SK-N-SH (cell line): ENCODE measurements at regions of chr3 and their contacts with region 1.

Region 1: GRCh38 chr3:173553635-173554280 is 156.2 kb downstream of the NLGN1 start:
- DNase-seq: peak; percentile 26
- H3K4me3 ChIP-seq: no peak overlapping the region
- H3K27ac ChIP-seq: no peak overlapping the region
- H3K4me1 ChIP-seq: no peaks in the 10 kb centered on the region
- H3K27me3 ChIP-seq: no peaks in the 10 kb centered on the region
- CTCF ChIP-seq: peak; percentile 83
- EP300 ChIP-seq: no peak
- RAD21 ChIP-seq: peak; percentile 62

Region 2: DNA sequence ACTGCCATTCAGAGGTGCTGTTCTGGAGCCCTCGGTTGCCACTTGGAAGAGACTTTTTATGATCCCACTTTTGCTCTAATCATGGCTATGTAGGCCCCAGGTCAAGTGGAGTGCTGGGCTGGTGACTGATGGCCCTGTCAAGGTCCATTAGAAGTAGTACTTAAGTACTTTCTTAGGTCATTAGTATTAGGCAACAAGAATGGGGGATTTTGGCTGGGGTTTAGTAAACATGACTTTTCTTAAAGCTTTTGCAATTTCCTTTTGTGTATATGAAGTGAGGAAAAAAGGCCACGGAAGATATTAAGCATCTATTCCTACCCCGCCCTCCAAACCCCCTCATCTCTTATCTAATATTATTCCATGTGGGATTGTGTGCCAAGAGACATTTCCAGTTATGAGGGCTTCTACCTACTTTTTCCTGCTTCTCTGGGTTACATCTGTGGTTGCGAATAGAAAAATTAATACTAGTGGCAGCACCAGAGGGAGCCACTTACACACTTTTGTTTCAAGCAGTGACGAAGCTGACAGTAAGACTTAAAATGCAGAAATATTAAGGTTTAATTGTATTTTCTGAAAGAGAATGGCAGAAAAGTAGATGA is 142.3 kb before region 1 on chr3:
- CTCF ChIA-PET with region 1: interaction called, 29 read pairs
- POLR2A ChIA-PET with region 1: no interaction called
- DNase-seq: peak; percentile 37
- H3K4me3 ChIP-seq: no peak overlapping the region; a peak in 1 of 4 replicates
- H3K27ac ChIP-seq: no peak overlapping the region
- H3K4me1 ChIP-seq: no peaks in the 10 kb centered on the region; a peak in 2 of 4 replicates
- H3K27me3 ChIP-seq: no peaks in the 10 kb centered on the region
- CTCF ChIP-seq: peak; percentile 72
- EP300 ChIP-seq: no peak
- RAD21 ChIP-seq: peak; percentile 76

Region 3: DNA sequence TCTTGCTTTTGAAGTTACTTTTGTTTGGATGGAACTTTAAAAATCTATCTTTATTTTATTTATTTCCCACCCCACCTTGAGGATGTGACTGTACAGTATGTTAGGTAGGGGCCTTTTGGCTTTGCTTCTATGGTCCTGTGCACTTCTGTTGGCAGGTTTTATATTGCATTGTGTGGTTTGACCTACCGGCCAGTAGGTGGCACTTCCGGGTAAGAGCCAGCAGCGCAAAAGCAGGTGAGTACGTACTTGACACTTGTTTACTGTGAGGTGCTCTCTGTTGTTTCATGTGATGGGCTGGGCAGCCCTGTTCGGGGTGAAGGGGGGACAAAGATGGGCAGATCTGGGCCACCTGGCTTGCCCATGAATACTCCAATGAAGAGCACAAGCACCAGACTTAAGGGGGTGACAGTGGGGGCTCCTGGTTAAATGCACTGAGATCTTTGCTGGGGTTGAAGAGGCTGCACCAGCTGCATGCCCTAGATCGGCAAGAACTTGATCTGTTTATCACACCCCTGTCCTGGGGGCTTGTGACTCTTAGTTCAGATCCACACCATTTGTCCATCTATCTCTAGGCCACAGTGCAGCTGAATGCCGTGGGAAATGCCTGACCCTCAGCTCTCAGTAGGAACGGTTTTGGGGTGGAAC is 24.6 kb before region 1 on chr3:
- CTCF ChIA-PET with region 1: interaction called, 13 read pairs
- POLR2A ChIA-PET with region 1: no interaction called
- DNase-seq: peak; percentile 11
- H3K4me3 ChIP-seq: no peak overlapping the region
- H3K27ac ChIP-seq: no peak overlapping the region
- H3K4me1 ChIP-seq: no peaks in the 10 kb centered on the region
- H3K27me3 ChIP-seq: no peaks in the 10 kb centered on the region
- CTCF ChIP-seq: peak; percentile 53
- EP300 ChIP-seq: no peak
- RAD21 ChIP-seq: peak; percentile 59

Region 4: DNA sequence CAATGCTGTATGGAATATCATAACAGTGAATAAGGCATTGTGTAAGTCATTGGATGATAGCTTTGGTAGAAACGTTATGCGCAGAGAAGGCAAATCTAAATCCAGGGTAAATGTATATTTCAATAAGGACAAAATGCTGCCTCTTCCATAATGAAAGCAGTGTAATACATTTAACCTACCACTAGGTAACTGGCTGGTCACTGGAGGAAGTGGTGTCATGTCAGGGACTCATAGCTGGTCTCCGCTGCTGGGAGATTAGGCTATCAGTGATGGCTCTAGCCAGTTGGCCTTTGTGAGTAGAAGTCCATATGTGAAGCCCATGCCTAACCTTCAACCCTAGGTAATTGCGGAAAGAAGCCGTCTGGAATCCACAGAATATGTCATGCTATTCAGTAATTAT is 15.3 kb before region 1 on chr3:
- CTCF ChIA-PET with region 1: interaction called, 12 read pairs
- POLR2A ChIA-PET with region 1: no interaction called
- DNase-seq: no peak
- H3K4me3 ChIP-seq: no peak overlapping the region
- H3K27ac ChIP-seq: no peak overlapping the region
- H3K4me1 ChIP-seq: no peaks in the 10 kb centered on the region
- H3K27me3 ChIP-seq: no peaks in the 10 kb centered on the region
- CTCF ChIP-seq: peak; percentile 25; the same call in 1 of the 2 replicates
- EP300 ChIP-seq: no peak
- RAD21 ChIP-seq: no peak

Region 5: DNA sequence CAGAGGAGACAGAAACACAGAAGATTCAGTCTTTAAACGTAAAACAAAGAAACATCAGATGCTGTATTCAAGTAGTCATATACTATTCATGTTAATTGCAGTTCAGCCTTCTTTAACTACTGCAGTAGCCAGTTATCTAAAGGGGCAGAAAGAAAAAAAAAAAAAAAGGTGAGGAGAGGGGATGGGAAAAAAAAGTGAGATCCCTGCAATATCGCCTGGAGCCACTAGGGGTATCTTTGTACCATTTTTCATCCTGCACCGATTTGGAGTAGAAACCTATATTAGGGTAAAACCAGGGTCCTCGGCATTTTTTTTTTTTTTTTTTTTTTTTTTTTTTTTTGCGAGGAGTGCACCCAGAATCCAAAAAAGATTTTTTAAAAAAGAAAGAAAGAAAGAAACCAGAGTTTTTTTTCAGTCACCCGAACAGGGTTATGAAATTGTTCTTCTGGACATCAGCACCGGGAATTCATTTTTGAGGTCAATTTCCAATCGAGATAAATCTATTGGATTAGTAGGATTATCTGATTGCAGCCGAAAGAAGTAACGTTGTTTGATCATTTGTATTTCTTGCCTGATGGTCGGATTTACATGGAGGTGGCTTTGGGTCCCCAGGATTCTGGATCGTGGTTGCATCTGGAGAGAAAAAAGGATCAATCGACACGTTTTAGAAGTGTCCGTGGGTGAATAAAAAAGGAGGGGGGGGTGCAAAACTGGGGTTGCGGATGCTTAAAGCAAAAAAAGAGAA is 30.5 kb after region 1 on chr3:
- CTCF ChIA-PET with region 1: interaction called, 12 read pairs
- POLR2A ChIA-PET with region 1: no interaction called
- DNase-seq: peak; percentile 57
- H3K4me3 ChIP-seq: peak overlapping the region; percentile 73 to 94
- H3K27ac ChIP-seq: peak overlapping the region; percentile 22 to 72; a peak in 2 of 4 replicates
- H3K4me1 ChIP-seq: peaks cover 0 to 5% of the 10 kb centered on the region in 2 experiments; a peak in 2 of 4 replicates
- H3K27me3 ChIP-seq: no peaks in the 10 kb centered on the region
- CTCF ChIP-seq: peak; percentile 85
- EP300 ChIP-seq: no peak
- RAD21 ChIP-seq: peak; percentile 75